A673 (cell line): ENCODE measurements at regions of chr10 and their contacts with region 1.

Region 1: GRCh38 chr10:106284802-106285587 is 879.5 kb downstream of the SORCS1 start:
- DNase-seq: no peak
- H3K4me3 ChIP-seq: no peak overlapping the region
- H3K27ac ChIP-seq: no peak overlapping the region
- H3K4me1 ChIP-seq: no peaks in the 10 kb centered on the region
- H3K27me3 ChIP-seq: no peaks in the 10 kb centered on the region
- CTCF ChIP-seq: no peak

Region 2: DNA sequence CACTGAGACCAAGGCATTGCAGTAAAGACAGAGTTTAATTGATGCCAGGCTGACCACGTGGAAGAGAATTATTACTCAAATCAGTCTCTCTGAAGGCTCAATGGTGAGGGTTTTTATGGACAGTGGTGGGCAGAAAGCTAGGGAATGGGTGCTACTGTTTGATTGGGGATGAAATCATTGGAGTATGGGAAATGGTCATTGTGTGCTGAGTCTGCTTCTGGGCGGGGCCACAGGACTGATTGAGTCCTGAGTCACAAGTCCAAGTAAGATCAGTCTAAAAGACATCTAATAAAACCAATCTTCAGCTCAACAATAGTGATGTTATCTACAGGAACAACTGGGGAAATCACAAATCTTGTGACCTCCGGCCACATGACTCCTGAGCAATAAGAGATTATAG is 775.5 kb before region 1 on chr10:
- CTCF ChIA-PET with region 1: no interaction called
- POLR2A ChIA-PET with region 1: interaction called, 11 read pairs
- intact Hi-C with region 1: no loop called
- DNase-seq: no peak
- H3K4me3 ChIP-seq: no peak overlapping the region
- H3K27ac ChIP-seq: no peak overlapping the region
- H3K4me1 ChIP-seq: no peaks in the 10 kb centered on the region
- H3K27me3 ChIP-seq: no peaks in the 10 kb centered on the region
- CTCF ChIP-seq: no peak

Region 3: GRCh38 chr10:106000721-106001120 is 284.3 kb before region 1 on chr10:
- CTCF ChIA-PET with region 1: no interaction called
- POLR2A ChIA-PET with region 1: no interaction called
- intact Hi-C with region 1: no loop called
- DNase-seq: no peak
- H3K4me3 ChIP-seq: no peak overlapping the region
- H3K27ac ChIP-seq: no peak overlapping the region
- H3K4me1 ChIP-seq: no peaks in the 10 kb centered on the region
- H3K27me3 ChIP-seq: no peaks in the 10 kb centered on the region
- CTCF ChIP-seq: no peak